ENCODE measurements at regions of chr10 and their contacts with region 1.

Region 1: DNA sequence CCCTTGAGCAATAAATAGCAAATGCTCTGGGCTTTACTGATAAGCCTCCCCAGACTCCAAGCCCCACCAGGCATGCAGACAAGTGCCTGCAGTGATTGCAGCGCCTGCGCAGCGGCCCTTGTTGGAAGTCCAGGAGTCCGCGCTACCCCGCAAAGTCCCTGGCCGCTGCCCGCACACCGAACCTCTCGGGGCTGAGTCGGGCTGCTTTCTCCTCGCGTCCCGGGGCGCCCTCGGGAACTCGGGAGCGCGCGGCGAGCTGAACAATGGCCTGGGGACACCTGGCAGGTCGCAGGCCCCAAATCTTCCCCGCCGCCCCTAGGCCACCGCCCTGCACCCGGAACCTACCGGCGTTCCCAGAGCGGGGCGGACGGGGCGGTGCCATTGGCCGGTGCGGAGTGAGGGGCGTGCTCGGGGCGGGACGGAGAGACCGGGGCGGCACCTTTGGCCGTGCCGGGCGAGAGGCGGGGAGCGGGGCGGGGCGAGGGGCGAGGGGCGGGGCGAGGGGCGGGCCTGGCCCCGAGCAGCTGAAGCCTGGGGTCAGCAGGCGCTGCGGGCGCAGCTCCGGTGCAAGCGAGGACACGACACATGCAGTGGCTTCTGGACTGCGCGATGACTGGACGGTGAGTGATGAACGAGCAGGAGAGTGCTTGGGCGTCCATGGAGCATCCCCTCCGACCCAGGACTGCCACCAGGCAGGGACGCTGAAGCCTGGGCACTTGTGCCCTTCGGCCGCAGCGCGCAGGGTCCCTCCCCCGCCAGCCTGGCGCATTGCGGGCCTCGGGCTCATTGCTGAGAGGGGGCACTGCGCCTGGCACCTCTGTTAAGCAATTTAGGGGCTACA is at the start of gene RASSF4:
- H3K4me3 Mint-ChIP-seq: peak within 1 kb of the TSS; percentile 96
- H3K27ac Mint-ChIP-seq: peak within 1 kb of the TSS; percentile 88
- H3K4me1 Mint-ChIP-seq: peaks cover 81% of the 10 kb centered on the region
- H3K27me3 Mint-ChIP-seq: no peaks in the 10 kb centered on the region

Region 2: DNA sequence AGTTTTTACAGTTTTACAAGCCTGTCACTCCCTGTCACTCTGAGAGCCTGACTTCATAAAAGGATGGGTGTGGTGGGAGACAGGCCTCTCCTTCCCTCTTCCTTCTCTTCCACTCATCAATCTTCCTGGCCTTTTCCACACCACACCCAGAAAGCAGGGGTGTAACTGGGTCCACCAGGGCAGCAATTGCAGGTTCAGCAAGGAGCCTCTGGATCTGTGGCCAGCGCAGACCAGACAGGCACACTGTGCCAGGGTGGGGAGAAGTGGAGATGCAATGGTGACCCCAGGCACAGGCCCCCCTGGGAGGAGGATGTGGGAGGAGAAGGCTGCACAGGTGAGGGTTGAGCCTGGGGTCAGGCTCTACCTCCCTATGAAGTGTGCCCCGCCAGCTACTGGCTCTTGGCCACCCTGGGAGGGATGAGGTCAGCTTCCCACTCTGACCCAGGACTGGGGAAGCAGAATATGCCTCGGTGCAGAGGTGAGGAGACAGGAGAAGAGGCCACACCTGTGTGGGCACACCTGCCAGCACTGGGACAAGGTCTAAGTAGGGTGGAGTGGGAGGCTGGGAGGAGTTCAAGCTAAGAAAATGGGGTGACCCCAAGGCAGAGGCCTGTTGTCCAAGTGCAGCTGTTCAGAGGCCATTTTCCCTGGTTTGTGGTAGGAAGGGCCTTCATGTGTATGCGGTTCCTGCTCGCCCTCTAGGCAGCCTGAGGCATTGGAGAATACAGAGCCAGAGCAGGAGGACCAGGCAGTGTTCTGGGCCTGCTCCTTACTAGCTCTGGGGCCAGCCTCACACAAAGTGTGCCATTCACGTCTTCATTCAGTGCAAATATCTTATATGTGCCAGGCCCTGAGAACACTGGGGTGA is 68.5 kb before region 1 on chr10:
- intact Hi-C with region 1: no loop called
- H3K4me3 Mint-ChIP-seq: no peak overlapping the region
- H3K27ac Mint-ChIP-seq: no peak overlapping the region
- H3K4me1 Mint-ChIP-seq: no peaks in the 10 kb centered on the region
- H3K27me3 Mint-ChIP-seq: peaks cover 2% of the 10 kb centered on the region

Region 3: GRCh38 chr10:44932517-44933450 is 26.7 kb before region 1 on chr10:
- intact Hi-C with region 1: loop called (anchors 2 kb)
- H3K4me3 Mint-ChIP-seq: no peak overlapping the region
- H3K27ac Mint-ChIP-seq: no peak overlapping the region
- H3K4me1 Mint-ChIP-seq: peaks cover 58% of the 10 kb centered on the region
- H3K27me3 Mint-ChIP-seq: peaks cover 7% of the 10 kb centered on the region

Region 4: DNA sequence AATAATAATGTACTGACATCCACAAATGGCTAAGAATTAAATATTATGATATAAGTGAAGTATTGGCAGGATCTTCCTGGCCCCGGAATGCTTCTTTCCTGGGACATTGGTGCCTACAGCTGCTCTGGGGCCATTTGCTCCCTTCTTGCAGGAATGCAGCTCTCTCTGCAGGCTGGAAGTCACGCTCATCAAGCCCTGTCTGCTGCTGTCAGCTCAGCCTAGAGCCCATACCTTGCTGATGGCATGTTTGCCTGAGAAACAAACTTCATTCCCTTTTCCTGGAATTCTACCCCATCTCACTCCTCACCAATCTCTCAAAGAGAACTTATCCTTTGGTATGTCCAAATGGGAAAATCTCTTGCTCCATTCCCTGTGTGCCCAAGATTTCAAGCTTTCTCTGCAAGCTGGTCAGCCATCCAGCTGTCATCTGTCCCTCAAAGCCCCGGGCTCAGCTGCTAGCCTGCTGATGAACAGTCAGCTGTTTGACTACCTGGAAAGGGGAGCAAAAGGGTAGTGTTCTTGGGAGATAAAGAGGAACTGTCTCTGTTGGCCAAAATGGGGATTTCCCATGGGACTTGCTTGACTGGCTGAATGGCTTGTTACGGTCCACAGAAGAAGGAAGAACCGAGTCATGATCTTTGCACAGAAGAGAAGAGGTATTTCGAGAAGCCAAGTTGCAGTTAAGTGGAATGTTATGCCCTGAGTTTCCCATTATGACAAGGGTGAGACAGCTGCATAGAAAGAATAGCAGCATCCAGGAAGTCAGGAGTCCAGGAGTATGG is 11.9 kb before region 1 on chr10:
- intact Hi-C with region 1: loop called (anchors 2 kb)
- H3K4me3 Mint-ChIP-seq: peak overlapping the region; percentile 54
- H3K27ac Mint-ChIP-seq: peak overlapping the region; percentile 85
- H3K4me1 Mint-ChIP-seq: peaks cover 60% of the 10 kb centered on the region
- H3K27me3 Mint-ChIP-seq: no peaks in the 10 kb centered on the region

Region 5: GRCh38 chr10:44974628-44975431 is 15.4 kb after region 1 on chr10:
- intact Hi-C with region 1: loop called (anchors 2 kb)
- H3K4me3 Mint-ChIP-seq: peak overlapping the region; percentile 46
- H3K27ac Mint-ChIP-seq: peak overlapping the region; percentile 88
- H3K4me1 Mint-ChIP-seq: peaks cover 91% of the 10 kb centered on the region
- H3K27me3 Mint-ChIP-seq: no peaks in the 10 kb centered on the region

Region 6: GRCh38 chr10:45235798-45236231 is 276.3 kb after region 1 on chr10:
- intact Hi-C with region 1: no loop called
- H3K4me3 Mint-ChIP-seq: no peak overlapping the region
- H3K27ac Mint-ChIP-seq: peak overlapping the region; percentile 7
- H3K4me1 Mint-ChIP-seq: peaks cover 26% of the 10 kb centered on the region
- H3K27me3 Mint-ChIP-seq: no peaks in the 10 kb centered on the region